ENCODE measurements at regions of chr21 and their contacts with region 1.

Region 1: GRCh38 chr21:44428281-44428942 is 26.9 kb upstream of the LRRC3 start:
- DNase-seq: peak in 13 of 14 experiments; percentile 10 to 78 (median 45)
- ATAC-seq: peak; percentile 87
- H3K4me3 ChIP-seq: no peak overlapping the region
- H3K4me3 Mint-ChIP-seq: no peak overlapping the region
- H3K27ac ChIP-seq: no peak overlapping the region
- H3K27ac Mint-ChIP-seq: no peak overlapping the region
- H3K4me1 ChIP-seq: no peaks in the 10 kb centered on the region
- H3K4me1 Mint-ChIP-seq: no peaks in the 10 kb centered on the region
- H3K27me3 ChIP-seq: no peaks in the 10 kb centered on the region
- H3K27me3 Mint-ChIP-seq: no peaks in the 10 kb centered on the region
- CTCF ChIP-seq: no peak

Region 2: DNA sequence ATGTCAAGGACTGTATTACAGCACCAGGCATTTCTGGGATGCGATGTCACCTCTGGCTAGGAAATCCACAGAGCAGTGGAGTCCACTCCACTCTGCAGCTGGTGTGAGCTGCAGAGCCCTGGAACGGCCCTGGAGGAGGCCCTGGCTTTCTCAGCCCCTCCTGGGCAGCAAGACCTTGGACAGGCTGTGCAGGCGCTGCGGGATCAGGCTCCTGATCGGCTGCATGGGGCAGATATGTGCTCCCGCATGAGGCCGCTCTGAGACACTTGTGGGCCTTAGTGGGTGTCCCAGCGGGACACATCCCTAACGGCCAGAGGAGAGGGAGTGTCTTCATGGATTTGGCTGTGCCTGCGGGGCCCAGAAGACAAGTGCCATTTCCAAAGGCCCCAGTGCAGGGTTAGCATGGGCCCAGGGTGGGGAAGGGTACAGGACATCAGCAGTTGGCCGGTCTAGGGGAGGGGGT is 172.9 kb before region 1 on chr21:
- CTCF ChIA-PET with region 1: no interaction called
- POLR2A ChIA-PET with region 1: no interaction called
- intact Hi-C with region 1: no loop called
- DNase-seq: peak in 1 of 14 experiments; percentile 22
- ATAC-seq: no peak
- H3K4me3 ChIP-seq: no peak overlapping the region
- H3K4me3 Mint-ChIP-seq: no peak overlapping the region
- H3K27ac ChIP-seq: no peak overlapping the region
- H3K27ac Mint-ChIP-seq: no peak overlapping the region
- H3K4me1 ChIP-seq: no peaks in the 10 kb centered on the region
- H3K4me1 Mint-ChIP-seq: no peaks in the 10 kb centered on the region
- H3K27me3 ChIP-seq: no peaks in the 10 kb centered on the region
- H3K27me3 Mint-ChIP-seq: no peaks in the 10 kb centered on the region
- CTCF ChIP-seq: no peak

Region 3: DNA sequence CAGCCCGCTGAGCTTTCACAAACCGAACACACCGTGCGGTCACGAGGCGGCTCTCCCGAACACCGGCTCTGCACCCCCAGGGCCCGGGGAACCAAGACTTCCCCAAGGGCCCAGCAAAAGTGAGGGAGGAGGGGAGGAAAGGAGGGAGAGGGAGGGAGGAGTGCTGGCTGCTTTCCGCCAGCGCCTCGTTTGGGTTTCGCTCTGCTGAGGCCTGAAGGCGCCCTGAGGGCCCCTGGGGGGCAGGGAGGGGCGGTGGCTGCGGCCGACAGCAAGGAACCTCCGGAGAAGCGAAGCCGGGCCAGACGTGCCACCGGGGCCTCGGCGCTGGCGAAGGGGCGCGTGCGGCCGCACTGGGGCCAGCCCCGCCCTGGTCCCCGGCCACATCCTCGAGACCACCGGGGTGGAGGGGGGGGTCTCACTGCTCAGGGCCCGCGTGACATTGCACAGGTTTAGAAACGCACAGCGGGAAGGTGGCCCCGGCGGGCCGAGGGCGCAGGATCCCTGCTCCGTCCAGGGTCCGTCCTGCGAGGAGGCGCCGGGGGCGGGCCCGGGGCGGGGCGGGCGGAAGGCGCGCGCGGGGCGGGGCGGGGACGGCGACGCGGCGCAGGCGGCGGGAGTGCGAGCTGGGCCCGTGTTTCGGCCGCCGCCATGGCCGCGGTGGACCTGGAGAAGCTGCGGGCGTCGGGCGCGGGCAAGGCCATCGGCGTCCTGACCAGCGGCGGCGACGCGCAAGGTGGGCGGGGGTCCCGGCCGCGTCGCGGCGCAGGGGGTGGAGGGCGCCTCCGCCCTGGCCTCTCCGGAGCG is 128.8 kb before region 1 on chr21 and contains the start of gene PFKL:
- CTCF ChIA-PET with region 1: no interaction called
- POLR2A ChIA-PET with region 1: no interaction called
- intact Hi-C with region 1: no loop called
- DNase-seq: peak in 12 of 14 experiments; percentile 31 to 77 (median 52)
- ATAC-seq: peak; percentile 48
- H3K4me3 ChIP-seq: peak within 1 kb of the TSS; percentile 69
- H3K4me3 Mint-ChIP-seq: peak within 1 kb of the TSS; percentile 95
- H3K27ac ChIP-seq: peak within 1 kb of the TSS; percentile 52 to 67
- H3K27ac Mint-ChIP-seq: peak within 1 kb of the TSS; percentile 97
- H3K4me1 ChIP-seq: peaks cover 83% of the 10 kb centered on the region
- H3K4me1 Mint-ChIP-seq: peaks cover 51% of the 10 kb centered on the region
- H3K27me3 ChIP-seq: no peaks in the 10 kb centered on the region
- H3K27me3 Mint-ChIP-seq: no peaks in the 10 kb centered on the region
- CTCF ChIP-seq: no peak
- total RNA-seq, gene PFKL: 115 to 117 TPM

Region 4: DNA sequence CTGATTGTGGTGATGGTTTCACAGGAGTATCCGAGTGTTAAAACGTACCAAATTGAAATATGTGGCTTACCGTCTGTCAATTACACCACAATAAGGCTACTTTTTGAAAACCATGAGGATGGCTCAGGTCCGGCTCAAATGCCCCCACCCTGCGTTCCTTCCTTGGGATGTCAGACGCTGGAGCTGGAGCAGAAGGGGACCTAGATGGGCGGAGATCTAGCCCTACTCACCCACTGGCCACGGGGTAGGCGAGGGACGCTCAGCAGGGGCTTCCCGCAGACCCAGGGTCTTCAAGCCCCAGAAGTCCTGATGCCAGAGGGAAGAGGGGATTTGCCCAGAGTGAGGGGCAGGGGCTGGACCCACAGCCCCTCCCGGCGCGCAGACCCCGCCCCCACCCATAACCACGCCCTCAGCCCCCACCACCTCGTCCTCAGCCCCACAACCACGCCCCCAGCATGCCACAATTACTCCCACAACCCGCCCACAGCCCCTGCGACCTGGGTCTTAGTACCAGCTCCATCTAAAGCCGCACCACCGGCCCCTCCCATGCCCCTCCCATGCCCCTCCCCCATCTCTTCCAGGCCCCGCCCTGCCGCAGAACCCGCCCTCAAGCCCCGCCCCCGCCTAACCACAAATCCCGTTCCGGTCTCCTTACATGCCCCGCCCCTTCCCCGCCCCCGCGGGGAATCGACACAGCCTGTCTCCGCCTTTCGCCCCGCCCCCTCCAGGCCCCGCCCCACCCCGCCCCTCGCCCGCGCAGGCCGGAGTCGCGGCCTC is 26.5 kb after region 1 on chr21 and contains the start of gene LRRC3:
- CTCF ChIA-PET with region 1: no interaction called
- POLR2A ChIA-PET with region 1: no interaction called
- intact Hi-C with region 1: loop called in 1 of 2 experiments (anchors 1 kb)
- DNase-seq: peak; percentile 66 to 93 (median 80)
- ATAC-seq: peak; percentile 82
- H3K4me3 ChIP-seq: peak within 1 kb of the TSS; percentile 56
- H3K4me3 Mint-ChIP-seq: peak within 1 kb of the TSS; percentile 84
- H3K27ac ChIP-seq: no peak within 1 kb of the TSS
- H3K27ac Mint-ChIP-seq: no peak within 1 kb of the TSS
- H3K4me1 ChIP-seq: peaks cover 15% of the 10 kb centered on the region
- H3K4me1 Mint-ChIP-seq: peaks cover 11% of the 10 kb centered on the region
- H3K27me3 ChIP-seq: no peaks in the 10 kb centered on the region
- H3K27me3 Mint-ChIP-seq: peaks cover 9% of the 10 kb centered on the region
- CTCF ChIP-seq: no peak
- total RNA-seq, gene LRRC3: 0.55 to 0.61 TPM

Region 5: DNA sequence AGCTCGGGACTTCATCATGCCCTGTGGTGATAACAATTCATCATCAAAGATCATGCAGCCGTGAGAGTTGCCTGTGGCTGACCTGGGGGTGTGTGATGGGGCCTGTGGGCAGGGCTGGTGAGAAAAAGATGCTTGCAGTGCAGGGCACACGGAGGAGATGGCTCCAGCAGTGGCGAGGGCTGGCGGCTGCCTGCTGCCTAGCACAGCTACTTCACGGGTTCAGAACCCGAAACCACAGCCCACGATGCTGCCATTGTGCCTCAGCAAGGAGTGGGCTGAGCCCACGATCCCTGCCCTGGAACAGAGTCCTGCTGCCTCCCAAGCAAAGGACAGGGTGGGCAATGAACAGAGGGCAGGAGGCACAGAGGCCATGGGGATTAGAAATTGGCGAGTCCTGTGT is 197.8 kb after region 1 on chr21:
- CTCF ChIA-PET with region 1: no interaction called
- POLR2A ChIA-PET with region 1: no interaction called
- intact Hi-C with region 1: no loop called
- DNase-seq: peak in 1 of 14 experiments; percentile 68
- ATAC-seq: no peak
- H3K4me3 ChIP-seq: no peak overlapping the region
- H3K4me3 Mint-ChIP-seq: no peak overlapping the region
- H3K27ac ChIP-seq: no peak overlapping the region
- H3K27ac Mint-ChIP-seq: no peak overlapping the region
- H3K4me1 ChIP-seq: peaks cover 47% of the 10 kb centered on the region
- H3K4me1 Mint-ChIP-seq: peaks cover 25% of the 10 kb centered on the region
- H3K27me3 ChIP-seq: no peaks in the 10 kb centered on the region
- H3K27me3 Mint-ChIP-seq: no peaks in the 10 kb centered on the region
- CTCF ChIP-seq: no peak

Measured in CD4-positive, alpha-beta T cell (primary cell).